A549 (cell line): ENCODE measurements at regions of chr17 and their contacts with region 1.

Region 1: DNA sequence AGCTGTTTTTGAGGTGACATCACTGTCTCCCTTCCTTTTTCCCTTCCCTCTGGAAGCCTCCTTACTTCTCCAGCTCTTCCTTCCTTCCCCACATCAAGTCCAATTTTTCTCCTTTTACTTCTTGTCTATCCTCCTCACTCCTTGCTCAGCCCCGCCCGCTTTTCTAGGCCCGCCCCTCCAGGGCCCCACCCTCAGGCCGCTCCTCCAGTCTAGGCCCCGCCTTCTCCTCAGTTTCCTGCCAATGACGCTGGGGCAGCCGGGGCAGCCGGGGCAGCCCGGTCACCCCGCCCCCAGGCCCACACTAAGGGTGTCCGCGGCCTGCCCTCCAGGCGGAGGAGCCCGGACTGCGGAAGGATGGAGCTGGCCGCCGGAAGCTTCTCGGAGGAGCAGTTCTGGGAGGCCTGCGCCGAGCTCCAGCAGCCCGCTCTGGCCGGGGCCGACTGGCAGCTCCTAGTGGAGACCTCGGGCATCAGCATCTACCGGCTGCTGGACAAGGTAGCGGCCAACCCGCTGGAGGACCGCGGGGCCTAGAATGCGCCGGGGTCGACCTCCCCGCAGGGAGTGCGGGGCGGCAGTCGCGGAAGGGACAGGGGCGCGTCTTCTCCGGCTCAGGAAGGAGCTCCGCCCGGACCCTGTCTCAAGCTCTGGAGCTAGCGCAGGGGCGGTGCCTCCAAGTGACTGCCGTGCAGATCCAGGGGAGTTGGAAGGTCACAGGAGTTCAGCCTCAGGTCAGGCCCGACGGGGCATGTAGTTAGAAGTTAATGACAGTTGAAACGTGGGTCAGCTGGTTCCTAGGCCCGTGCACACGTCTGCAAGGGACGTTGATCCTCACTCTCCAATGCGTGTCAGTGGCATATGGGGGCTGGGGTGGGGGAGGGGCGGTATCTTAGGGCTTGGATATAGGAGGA is at the start of gene PCTP:
- DNase-seq: peak; percentile 91 to 94
- ATAC-seq: peak; percentile 97 to 99
- H3K4me3 ChIP-seq: peak within 1 kb of the TSS; percentile 58
- H3K27ac ChIP-seq: peak within 1 kb of the TSS; percentile 86 to 94
- H3K4me1 ChIP-seq: peaks cover 12% of the 10 kb centered on the region; the same call in 2 of the 3 replicates
- CTCF ChIP-seq: 0 out of 3 replicates have a peak, but pooled peaks have one; percentile 5
- EP300 ChIP-seq: no peak
- POLR2A ChIP-seq: peak; percentile 87
- RAD21 ChIP-seq: no peak; a peak in 1 of 5 replicates
- polyA plus RNA-seq, gene PCTP: 28.0 and 31.5 TPM in 2 replicates

Region 2: DNA sequence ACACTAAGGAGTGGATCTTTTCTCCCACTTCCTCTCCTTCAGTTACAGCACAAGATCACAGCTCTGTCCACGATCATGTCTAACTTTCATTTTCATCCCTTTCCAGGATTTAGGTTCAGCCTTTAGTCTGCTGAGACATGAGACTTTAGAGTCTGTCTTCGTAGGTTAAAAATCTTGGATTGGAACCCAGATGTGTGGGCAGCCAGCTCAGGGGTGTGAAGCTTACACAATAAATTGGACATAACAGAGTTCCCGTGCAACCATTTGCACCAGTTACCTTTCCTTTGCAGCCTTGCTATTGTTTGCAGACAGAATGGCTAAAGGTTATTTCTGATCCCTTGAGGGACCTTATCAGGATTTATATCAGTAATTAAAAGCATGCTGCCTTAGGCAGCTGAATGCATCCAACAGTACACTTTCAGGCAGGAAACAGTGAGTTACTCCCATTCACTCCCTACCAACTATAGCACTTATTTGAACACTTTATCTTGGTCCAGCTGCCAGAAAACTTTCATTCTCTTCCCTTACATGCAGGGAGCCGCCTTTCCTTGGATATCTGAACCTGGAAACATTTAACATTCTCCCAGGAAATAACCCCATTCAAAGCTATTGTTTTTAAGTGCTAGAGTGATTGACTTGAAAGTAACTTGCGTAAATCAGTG is 115.6 kb before region 1 on chr17:
- CTCF ChIA-PET with region 1: no interaction called
- POLR2A ChIA-PET with region 1: no interaction called
- DNase-seq: no peak
- ATAC-seq: no peak
- H3K4me3 ChIP-seq: no peak overlapping the region
- H3K27ac ChIP-seq: no peak overlapping the region
- H3K4me1 ChIP-seq: no peaks in the 10 kb centered on the region
- CTCF ChIP-seq: no peak
- EP300 ChIP-seq: no peak
- POLR2A ChIP-seq: no peak
- RAD21 ChIP-seq: no peak

Region 3: DNA sequence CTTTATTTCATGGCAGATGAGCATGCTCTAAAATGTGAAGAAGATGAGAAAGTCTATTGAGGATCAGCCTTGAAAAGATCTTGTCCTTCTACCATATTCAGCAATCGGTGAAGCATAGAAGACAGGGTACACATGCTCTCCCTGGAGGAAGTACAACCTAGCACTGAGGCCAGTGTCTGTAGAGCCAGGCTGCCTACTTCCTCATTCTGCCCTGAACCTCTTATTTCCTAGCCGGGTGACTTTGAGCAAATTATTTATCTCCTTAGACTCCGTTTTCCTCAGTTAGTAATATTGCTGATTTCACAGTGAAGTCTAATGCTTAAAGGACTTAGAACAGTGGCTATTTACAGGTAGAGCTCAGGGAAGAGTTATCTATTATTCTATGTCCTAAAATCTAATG is 86.7 kb before region 1 on chr17:
- CTCF ChIA-PET with region 1: no interaction called
- POLR2A ChIA-PET with region 1: no interaction called
- DNase-seq: no peak
- ATAC-seq: no peak
- H3K4me3 ChIP-seq: no peak overlapping the region
- H3K27ac ChIP-seq: no peak overlapping the region
- H3K4me1 ChIP-seq: no peaks in the 10 kb centered on the region
- CTCF ChIP-seq: no peak
- EP300 ChIP-seq: no peak
- POLR2A ChIP-seq: no peak
- RAD21 ChIP-seq: no peak

Region 4: GRCh38 chr17:55735731-55736405 is 15.1 kb before region 1 on chr17:
- CTCF ChIA-PET with region 1: interaction called, 18 read pairs
- POLR2A ChIA-PET with region 1: interaction called, 13 read pairs
- DNase-seq: peak; percentile 30 to 72
- ATAC-seq: peak; percentile 52 to 79; a peak in 3 of 6 replicates
- H3K4me3 ChIP-seq: no peak overlapping the region
- H3K27ac ChIP-seq: no peak overlapping the region
- H3K4me1 ChIP-seq: no peaks in the 10 kb centered on the region
- CTCF ChIP-seq: peak; percentile 86
- EP300 ChIP-seq: no peak
- POLR2A ChIP-seq: no peak
- RAD21 ChIP-seq: peak; percentile 56 to 58

Region 5: GRCh38 chr17:55763851-55764250 is 12.8 kb after region 1 on chr17:
- CTCF ChIA-PET with region 1: interaction called, 26 read pairs
- POLR2A ChIA-PET with region 1: interaction called, 9 read pairs
- DNase-seq: no peak
- ATAC-seq: no peak
- H3K4me3 ChIP-seq: no peak overlapping the region
- H3K27ac ChIP-seq: no peak overlapping the region
- H3K4me1 ChIP-seq: no peaks in the 10 kb centered on the region
- CTCF ChIP-seq: no peak
- EP300 ChIP-seq: no peak
- POLR2A ChIP-seq: no peak
- RAD21 ChIP-seq: no peak

Region 6: DNA sequence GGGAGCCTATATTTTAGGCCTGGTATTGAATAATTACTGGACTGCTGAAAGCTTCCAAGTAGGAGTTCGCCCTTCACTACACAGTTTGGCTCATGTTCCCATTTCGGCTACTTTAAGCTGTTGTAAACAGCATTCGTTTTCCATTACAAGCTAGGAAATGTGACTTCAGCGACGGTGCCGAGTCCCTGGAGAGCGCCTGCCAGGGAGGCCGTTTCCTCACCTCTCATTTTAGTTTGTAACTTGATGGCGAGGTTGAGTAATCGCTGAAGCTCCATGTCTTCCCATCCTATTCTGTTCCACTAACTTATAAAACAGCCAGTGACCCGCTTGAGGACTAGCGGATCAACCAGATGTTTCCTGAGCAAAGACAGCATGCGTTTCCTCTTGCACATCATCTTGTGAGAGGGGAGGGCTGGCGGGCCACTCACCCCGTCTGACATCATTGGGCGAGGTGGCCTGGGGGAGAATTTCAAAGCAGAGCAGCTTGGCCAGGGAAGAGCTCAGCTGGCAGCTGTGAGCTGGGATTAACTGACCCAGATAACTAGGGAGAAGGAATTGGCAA is 32.8 kb after region 1 on chr17:
- CTCF ChIA-PET with region 1: no interaction called
- POLR2A ChIA-PET with region 1: no interaction called
- DNase-seq: no peak
- ATAC-seq: no peak
- H3K4me3 ChIP-seq: no peak overlapping the region
- H3K27ac ChIP-seq: no peak overlapping the region
- H3K4me1 ChIP-seq: no peaks in the 10 kb centered on the region
- CTCF ChIP-seq: no peak
- EP300 ChIP-seq: no peak
- POLR2A ChIP-seq: no peak
- RAD21 ChIP-seq: no peak